ENCODE measurements at regions of chr2 and their contacts with region 1.

Region 1: DNA sequence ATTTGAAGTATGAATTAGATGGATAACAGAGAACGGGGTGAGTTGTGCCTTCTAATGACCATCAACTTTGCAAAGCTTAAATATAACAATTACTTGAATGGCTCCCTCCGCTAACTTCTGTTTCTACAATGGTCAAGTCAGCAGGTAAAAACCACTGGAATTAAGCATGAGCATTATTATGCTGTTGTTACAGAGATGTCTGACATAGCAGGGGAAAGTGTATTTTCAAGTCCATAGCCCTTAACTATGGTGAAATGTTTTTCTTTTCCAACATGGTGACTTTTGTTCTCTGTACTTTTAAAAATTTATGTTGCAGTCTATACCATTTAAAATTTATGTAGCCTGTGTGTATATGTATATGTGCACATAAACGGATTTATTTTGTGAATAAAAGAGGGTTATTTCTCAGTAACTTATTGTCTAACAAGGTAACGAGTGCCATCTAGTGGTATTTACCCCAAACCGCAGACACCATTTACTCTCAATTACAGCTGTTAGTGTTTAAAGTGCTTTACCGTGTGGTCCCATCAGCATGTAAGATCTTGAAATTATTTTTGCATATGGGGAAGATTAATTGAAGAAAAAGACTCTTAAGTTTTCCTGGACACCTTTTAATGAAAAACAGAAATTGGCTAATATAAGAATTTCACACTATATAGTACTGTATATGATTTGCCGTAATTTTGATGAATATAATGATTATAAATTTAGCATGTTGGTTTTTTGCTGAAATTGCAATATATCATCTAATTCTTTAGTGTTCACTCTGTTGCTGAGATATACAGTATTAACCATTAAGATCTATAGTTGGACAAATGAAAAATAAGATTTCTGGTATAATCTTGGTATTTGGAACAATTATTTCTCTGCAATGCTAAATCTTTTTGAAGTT is 78.2 kb downstream of the UBE2E3 start:
- DNase-seq: no peak
- ATAC-seq: no peak
- H3K4me3 ChIP-seq: no peak overlapping the region
- H3K27ac ChIP-seq: no peak overlapping the region
- H3K4me1 ChIP-seq: peaks cover 0 to 9% (median 0%) of the 10 kb centered on the region in 12 donors
- H3K27me3 ChIP-seq: no peaks in the 10 kb centered on the region
- CTCF ChIP-seq: peak; percentile 50 to 69 (median 60)
- POLR2A ChIP-seq: no peak

Region 2: GRCh38 chr2:180125245-180125962 is 933.2 kb before region 1 on chr2:
- intact Hi-C with region 1: loop called in 9 of 10 experiments (anchors 2 to 10 kb)
- DNase-seq: peak; percentile 16 to 64 (median 54)
- ATAC-seq: peak; percentile 73 to 98 (median 94)
- H3K4me3 ChIP-seq: no peak overlapping the region
- H3K27ac ChIP-seq: no peak overlapping the region
- H3K4me1 ChIP-seq: peaks cover 0 to 3% (median 0%) of the 10 kb centered on the region in 12 donors
- H3K27me3 ChIP-seq: peaks cover 0 to 9% (median 0%) of the 10 kb centered on the region in 9 donors
- CTCF ChIP-seq: peak; percentile 22 to 64 (median 51)
- POLR2A ChIP-seq: no peak

Region 3: GRCh38 chr2:180980106-180980942 is 78.3 kb before region 1 on chr2 and contains the start of gene UBE2E3:
- intact Hi-C with region 1: loop called in 1 of 10 experiments (anchors 5 kb)
- DNase-seq: peak; percentile 80 to 90 (median 85)
- ATAC-seq: peak; percentile 83 to 97 (median 94)
- H3K4me3 ChIP-seq: peak within 1 kb of the TSS; percentile 44 to 86 (median 72)
- H3K27ac ChIP-seq: peak within 1 kb of the TSS; percentile 70 to 91 (median 89)
- H3K4me1 ChIP-seq: peaks cover 0 to 44% (median 34%) of the 10 kb centered on the region in 12 donors
- H3K27me3 ChIP-seq: no peaks in the 10 kb centered on the region
- CTCF ChIP-seq: peak; percentile 40 to 82 (median 64)
- POLR2A ChIP-seq: peak in 1 of 2 donors; percentile 30
- total RNA-seq, gene UBE2E3: 47.6 to 61.9 (median 52.0) TPM

Measured in heart left ventricle (tissue), 16 donors.